ENCODE measurements at regions of chr7 and their contacts with region 1.

Region 1: GRCh38 chr7:122290476-122290875 is 14.1 kb downstream of the FEZF1 start:
- DNase-seq: no peak

Region 2: DNA sequence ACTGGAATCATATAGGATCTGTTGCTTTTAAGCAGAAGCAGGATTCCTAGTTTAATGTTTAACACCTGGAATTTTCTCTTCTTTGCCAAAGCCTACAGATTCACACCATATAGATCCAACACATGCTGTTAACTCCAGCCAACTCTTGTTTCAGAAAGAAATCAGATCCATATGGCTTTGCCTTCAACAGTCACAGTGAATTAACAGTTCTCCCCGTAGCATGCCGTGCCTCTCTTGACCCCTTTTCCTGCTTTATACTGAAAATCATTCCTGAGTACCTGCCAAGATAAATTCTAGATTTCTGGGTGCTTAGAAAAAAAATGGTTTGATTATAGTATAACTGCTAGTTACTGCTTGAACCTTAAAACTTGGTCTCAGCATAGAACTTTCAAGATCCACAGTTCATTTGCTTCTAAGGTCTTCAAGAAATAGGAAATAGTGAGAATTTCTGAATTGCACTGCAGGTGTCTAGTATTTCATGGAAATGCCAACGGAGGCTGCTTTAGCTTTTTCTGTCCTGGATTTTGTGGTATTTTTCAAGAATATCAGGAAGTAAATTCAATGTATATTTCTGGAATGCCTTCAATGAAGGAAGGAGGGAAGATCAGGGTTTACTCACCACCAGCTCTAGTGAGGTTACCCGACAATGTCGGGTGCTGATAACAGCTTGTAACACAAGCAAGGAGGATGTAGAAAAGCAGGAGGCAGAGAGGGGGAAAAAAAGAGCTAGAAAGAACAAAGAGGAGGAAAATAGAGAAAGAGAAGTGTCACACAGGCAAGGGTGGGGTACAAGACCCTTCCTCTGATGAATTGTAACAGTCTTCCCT is 153.0 kb before region 1 on chr7:
- intact Hi-C with region 1: no loop called
- DNase-seq: no peak

Region 3: GRCh38 chr7:122301858-122302760 is 11.6 kb after region 1 on chr7:
- intact Hi-C with region 1: loop called in 1 of 2 experiments (anchors 1 kb)
- DNase-seq: peak; percentile 78

Measured in posterior vena cava (tissue), 2 donors.